HEK293 (cell line): ENCODE measurements at regions of chr5 and their contacts with region 1.

Region 1: DNA sequence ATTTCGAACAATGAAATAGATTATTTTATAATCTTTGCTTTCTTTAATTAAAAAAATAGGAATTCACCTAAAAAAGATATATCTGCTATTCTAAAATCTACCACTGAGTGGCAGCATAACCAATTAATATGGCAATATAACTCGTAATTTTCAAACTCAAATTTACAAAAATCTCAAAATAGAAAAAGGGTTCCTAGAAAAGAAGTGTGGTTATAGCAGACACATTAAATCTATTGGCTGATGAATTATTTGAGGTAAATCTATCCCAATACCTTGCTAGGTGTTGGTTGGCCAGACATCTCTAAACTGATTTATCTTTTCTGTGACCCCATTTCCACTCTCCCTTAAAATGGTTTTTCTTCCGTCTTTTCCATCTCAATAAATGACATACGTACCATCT is 30.2 kb upstream of the NRG2 start:
- H3K4me3 ChIP-seq: no peak overlapping the region
- H3K27ac ChIP-seq: no peak overlapping the region
- H3K4me1 ChIP-seq: no peaks in the 10 kb centered on the region
- CTCF ChIP-seq: no peak; the same call in 1 of the 2 replicates

Region 2: DNA sequence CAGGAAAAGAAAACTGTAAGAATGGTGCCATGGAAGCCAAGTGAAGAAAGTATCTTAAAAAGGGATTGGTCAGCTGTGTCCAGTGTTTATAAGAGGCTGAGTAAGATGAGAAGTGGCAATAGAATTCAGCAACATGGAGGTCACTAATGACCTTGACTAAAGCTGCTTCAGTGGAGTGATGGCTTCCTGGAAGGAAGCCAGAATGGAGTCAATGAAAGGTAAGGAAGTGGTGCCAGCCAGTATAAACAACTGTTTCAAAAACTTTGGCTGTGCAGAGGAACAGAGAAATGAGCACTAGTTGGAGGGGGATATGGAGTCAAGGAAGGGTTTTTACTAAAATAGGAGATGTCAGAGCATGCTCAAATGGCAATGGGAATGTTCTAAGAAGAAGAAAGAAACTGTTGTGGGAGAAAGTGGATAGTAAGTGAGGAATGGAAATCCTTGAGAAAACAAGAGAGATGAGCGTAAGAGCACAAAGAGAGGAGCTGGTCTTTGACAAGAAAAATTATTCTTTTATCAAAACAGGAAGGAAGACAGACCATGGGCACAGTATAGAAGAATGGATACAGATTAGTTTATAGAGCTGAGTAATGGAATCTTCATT is 19.1 kb before region 1 on chr5:
- CTCF ChIA-PET with region 1: interaction called, 18 read pairs
- POLR2A ChIA-PET with region 1: no interaction called
- H3K4me3 ChIP-seq: no peak overlapping the region
- H3K27ac ChIP-seq: no peak overlapping the region
- H3K4me1 ChIP-seq: peaks cover 9% of the 10 kb centered on the region
- CTCF ChIP-seq: no peak

Region 3: GRCh38 chr5:140107312-140108083 is 34.2 kb after region 1 on chr5:
- CTCF ChIA-PET with region 1: interaction called, 25 read pairs
- POLR2A ChIA-PET with region 1: no interaction called
- H3K4me3 ChIP-seq: peak overlapping the region; percentile 85
- H3K27ac ChIP-seq: peak overlapping the region; percentile 92
- H3K4me1 ChIP-seq: peaks cover 19% of the 10 kb centered on the region
- CTCF ChIP-seq: peak; percentile 90

Region 4: DNA sequence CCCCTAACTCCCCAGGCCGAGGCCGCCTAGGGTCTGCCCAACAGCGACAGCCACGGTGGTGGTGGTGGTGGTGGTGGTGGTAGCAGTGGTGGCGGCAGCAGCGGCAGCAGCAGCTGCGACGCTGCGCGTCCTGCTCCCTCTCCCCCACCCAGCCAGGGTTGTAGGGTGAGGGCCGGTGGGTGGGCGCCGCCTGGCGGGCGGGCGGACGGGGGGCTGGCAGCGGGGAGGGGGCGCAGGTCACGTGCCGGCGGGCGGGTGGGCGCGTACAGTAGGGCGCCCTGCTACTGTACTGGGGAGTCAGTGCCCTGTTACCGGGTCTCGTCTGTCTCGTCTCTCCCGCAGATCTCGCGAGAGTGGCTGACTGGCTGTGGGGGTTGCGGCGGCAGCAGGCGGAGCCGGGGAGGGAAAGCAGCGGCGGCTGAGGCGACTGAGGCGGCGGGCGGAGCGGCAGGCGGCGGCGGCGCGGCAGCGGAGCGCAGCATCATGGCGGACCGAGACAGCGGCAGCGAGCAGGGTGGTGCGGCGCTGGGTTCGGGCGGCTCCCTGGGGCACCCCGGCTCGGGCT is 40.5 kb after region 1 on chr5 and contains the start of gene PURA:
- CTCF ChIA-PET with region 1: interaction called, 12 read pairs
- POLR2A ChIA-PET with region 1: interaction called, 3 read pairs
- H3K4me3 ChIP-seq: peak within 1 kb of the TSS; percentile 72
- H3K27ac ChIP-seq: peak within 1 kb of the TSS; percentile 97
- H3K4me1 ChIP-seq: peaks cover 36% of the 10 kb centered on the region
- CTCF ChIP-seq: peak; percentile 90

Region 5: DNA sequence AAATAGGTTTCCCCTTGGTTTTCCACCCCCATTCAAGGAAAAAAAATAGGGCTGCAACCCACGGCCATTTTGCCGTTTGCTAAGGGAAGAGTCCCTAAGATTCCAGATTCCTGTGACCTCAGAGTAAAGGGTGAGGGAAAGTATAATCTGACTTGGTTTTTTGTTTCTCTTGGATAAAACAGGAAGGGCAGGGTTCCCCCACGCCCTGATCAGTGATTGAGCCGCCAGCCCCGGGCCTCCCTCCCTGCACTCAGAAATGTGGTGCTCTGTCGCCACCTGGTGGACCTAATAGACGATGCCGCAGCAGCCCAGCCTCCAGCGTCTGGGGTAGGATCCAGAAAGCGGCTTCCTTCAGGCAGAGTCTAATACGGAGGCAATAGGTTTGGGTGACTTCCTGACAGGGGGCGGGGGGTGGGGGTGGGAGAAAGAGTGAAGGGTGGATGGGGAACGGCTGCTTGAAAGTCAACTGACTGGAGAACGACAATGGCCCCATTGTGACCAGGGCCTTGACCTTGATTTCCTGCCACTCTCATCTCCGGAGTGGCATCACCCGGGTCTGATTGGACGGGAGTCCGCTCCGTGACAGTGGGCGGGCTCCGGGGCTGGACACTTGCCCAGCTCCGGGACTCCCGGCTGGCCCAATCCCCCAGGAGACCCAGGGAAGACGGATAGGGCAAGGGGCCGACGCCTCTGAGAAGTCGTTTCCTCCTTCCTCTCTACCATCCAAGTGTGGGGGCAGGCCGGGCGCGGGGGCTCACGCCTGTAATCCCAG is 83.9 kb after region 1 on chr5:
- CTCF ChIA-PET with region 1: interaction called, 94 read pairs
- POLR2A ChIA-PET with region 1: no interaction called
- H3K4me3 ChIP-seq: peak overlapping the region; percentile 35
- H3K27ac ChIP-seq: peak overlapping the region; percentile 25; the same call in 1 of the 2 replicates
- H3K4me1 ChIP-seq: no peaks in the 10 kb centered on the region
- CTCF ChIP-seq: peak; percentile 78